Heart left ventricle (tissue), 16 donors: ENCODE measurements at regions of chr19 and their contacts with region 1.

Region 1: GRCh38 chr19:45340232-45340898 is at the start of gene KLC3:
- DNase-seq: no peak
- ATAC-seq: no peak
- H3K4me3 ChIP-seq: peak within 1 kb of the TSS in 9 of 12 donors; percentile 6 to 45 (median 22)
- H3K27ac ChIP-seq: no peak within 1 kb of the TSS
- H3K4me1 ChIP-seq: peaks cover 0 to 15% (median 1%) of the 10 kb centered on the region in 12 donors
- H3K27me3 ChIP-seq: peaks cover 10 to 23% (median 14%) of the 10 kb centered on the region in 9 donors
- CTCF ChIP-seq: no peak
- POLR2A ChIP-seq: no peak
- total RNA-seq, gene KLC3: 0.12 to 0.69 (median 0.30) TPM in 4 of 9 donors, not detected in the others

Region 2: GRCh38 chr19:45200568-45200994 is 139.8 kb before region 1 on chr19:
- intact Hi-C with region 1: loop called in 6 of 10 experiments (anchors 2 to 10 kb)
- DNase-seq: peak in 1 of 5 donors; percentile 23
- ATAC-seq: peak; percentile 51 to 69 (median 62)
- H3K4me3 ChIP-seq: no peak overlapping the region
- H3K27ac ChIP-seq: no peak overlapping the region
- H3K4me1 ChIP-seq: no peaks in the 10 kb centered on the region
- H3K27me3 ChIP-seq: no peaks in the 10 kb centered on the region
- CTCF ChIP-seq: peak; percentile 15 to 57 (median 40)
- POLR2A ChIP-seq: no peak

Region 3: GRCh38 chr19:45405435-45406225 is 65.3 kb after region 1 on chr19:
- intact Hi-C with region 1: no loop called
- DNase-seq: peak; percentile 92 to 93 (median 93)
- ATAC-seq: peak; percentile 63 to 79 (median 68)
- H3K4me3 ChIP-seq: peak overlapping the region; percentile 47 to 86 (median 70)
- H3K27ac ChIP-seq: peak overlapping the region; percentile 87 to 97 (median 93)
- H3K4me1 ChIP-seq: peaks cover 0 to 65% (median 38%) of the 10 kb centered on the region in 12 donors
- H3K27me3 ChIP-seq: peaks cover 0 to 19% (median 0%) of the 10 kb centered on the region in 9 donors
- CTCF ChIP-seq: no peak
- POLR2A ChIP-seq: peak in 1 of 2 donors; percentile 23